Right ventricle myocardium superior (tissue), 1 donor: ENCODE measurements at regions of chr6 and their contacts with region 1.

Region 1: GRCh38 chr6:35731736-35732532 is 4.9 kb upstream of the ARMC12 start:
- DNase-seq: peak; percentile 99
- ATAC-seq: peak; percentile 72

Region 2: GRCh38 chr6:35522660-35523658 is 209.0 kb before region 1 on chr6:
- intact Hi-C with region 1: loop called (anchors 2 kb)
- DNase-seq: peak; percentile 82
- ATAC-seq: peak; percentile 95

Region 3: GRCh38 chr6:35583893-35584688 is 147.8 kb before region 1 on chr6:
- intact Hi-C with region 1: loop called (anchors 1 kb)
- DNase-seq: no peak
- ATAC-seq: peak; percentile 78

Region 4: GRCh38 chr6:35601331-35602132 is 130.4 kb before region 1 on chr6:
- intact Hi-C with region 1: loop called (anchors 5 kb)
- DNase-seq: peak; percentile 64
- ATAC-seq: peak; percentile 88

Region 5: GRCh38 chr6:35688581-35689322 is 43.2 kb before region 1 on chr6 and contains the start of gene FKBP5:
- intact Hi-C with region 1: loop called (anchors 2 kb)
- DNase-seq: peak; percentile 98
- ATAC-seq: peak; percentile 91
- total RNA-seq, gene FKBP5: 106 TPM

Region 6: GRCh38 chr6:35804996-35805736 is 73.2 kb after region 1 on chr6 and contains the start of gene LHFPL5:
- intact Hi-C with region 1: no loop called
- DNase-seq: peak; percentile 50
- ATAC-seq: peak; percentile 87
- total RNA-seq, gene LHFPL5: not detected